ENCODE measurements at regions of chr9 and their contacts with region 1.

Region 1: GRCh38 chr9:116860509-116861120 is 173.5 kb downstream of the TRIM32 start:
- DNase-seq: peak; percentile 7
- ATAC-seq: no peak
- H3K4me3 ChIP-seq: no peak overlapping the region
- H3K4me3 Mint-ChIP-seq: no peak overlapping the region
- H3K27ac ChIP-seq: no peak overlapping the region
- H3K27ac Mint-ChIP-seq: no peak overlapping the region
- H3K4me1 ChIP-seq: no peaks in the 10 kb centered on the region
- H3K4me1 Mint-ChIP-seq: peaks cover 5% of the 10 kb centered on the region
- H3K27me3 ChIP-seq: no peaks in the 10 kb centered on the region
- H3K27me3 Mint-ChIP-seq: peaks cover 13% of the 10 kb centered on the region
- CTCF ChIP-seq: peak; percentile 35

Region 2: DNA sequence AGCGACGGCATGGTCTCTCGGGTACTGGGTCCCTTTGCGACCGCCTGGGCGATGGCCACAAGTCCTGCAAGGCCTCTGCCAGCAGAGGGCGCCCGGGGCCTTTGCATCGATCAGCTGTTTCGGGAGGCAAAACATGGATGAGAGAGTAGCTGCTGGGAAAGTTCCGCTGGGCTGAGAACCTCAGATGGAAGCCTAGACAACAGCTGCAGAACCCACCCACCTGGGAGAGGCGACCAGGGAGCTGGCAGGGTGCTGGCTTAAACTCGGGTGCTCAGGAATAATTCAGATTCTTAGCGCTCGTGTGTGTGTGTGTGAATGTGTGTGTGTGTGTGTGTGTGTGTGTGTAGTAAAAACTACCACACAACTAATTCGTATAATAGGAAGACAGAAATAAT is 123.5 kb before region 1 on chr9:
- CTCF ChIA-PET with region 1: interaction called, 13 read pairs
- POLR2A ChIA-PET with region 1: no interaction called
- intact Hi-C with region 1: no loop called
- DNase-seq: peak; percentile 37
- ATAC-seq: peak; percentile 24
- H3K4me3 ChIP-seq: no peak overlapping the region
- H3K4me3 Mint-ChIP-seq: no peak overlapping the region
- H3K27ac ChIP-seq: no peak overlapping the region
- H3K27ac Mint-ChIP-seq: no peak overlapping the region
- H3K4me1 ChIP-seq: no peaks in the 10 kb centered on the region
- H3K4me1 Mint-ChIP-seq: peaks cover 2% of the 10 kb centered on the region
- H3K27me3 ChIP-seq: peaks cover 0 to 13% (median 2%) of the 10 kb centered on the region in 4 experiments
- H3K27me3 Mint-ChIP-seq: peaks cover 21% of the 10 kb centered on the region
- CTCF ChIP-seq: peak; percentile 57